ENCODE measurements at regions of chr15 and their contacts with region 1.

Region 1: DNA sequence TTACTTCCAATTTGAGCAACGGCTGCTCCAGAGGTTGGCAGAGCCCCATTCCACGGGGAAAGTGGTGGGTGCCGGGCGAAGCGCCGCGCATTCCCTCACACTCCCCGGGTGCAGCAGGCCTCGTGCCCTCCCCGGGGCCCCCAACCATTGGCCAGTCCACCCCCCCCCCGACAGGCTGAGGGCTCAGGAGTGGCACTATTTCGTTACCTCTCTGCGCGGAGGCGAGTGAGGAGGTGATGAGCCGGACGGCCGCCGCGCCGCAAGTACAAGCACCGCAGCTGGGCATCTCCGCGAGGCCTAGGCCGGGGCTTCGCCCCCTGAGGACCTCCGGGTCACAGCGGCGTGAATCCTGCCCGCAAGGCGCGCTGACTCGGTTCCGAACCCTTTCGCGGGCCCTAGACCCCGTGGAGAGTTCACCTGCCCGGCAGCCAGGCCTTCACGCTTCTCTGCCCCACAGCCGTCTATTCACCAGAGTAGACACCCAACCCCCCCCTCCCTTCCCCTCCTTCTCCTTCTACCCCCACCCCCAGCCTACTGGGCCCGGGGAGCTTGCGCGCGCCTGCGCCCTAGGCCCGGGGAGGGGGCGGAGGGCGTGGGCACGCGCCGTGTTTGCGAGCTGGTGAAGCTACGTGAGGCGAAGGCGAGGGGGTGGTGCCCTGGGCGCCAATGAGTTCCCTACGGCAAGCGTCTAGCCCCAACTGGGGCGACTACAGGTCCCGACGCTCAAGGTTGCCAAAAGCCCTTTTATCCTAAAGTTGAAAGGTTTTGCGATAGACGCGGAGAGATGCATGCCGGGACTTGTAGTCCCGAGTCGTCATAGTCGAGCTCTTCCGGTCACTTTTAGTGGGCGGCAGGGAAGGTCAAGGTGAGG is at the start of gene CLPX:
- DNase-seq: peak; percentile 96
- ATAC-seq: peak; percentile 89
- H3K4me3 ChIP-seq: peak within 1 kb of the TSS; percentile 81 to 97 (median 90)
- H3K27ac ChIP-seq: peak within 1 kb of the TSS; percentile 92
- H3K4me1 ChIP-seq: peaks cover 53% of the 10 kb centered on the region
- H3K27me3 ChIP-seq: no peaks in the 10 kb centered on the region; a peak in 1 of 5 replicates
- CTCF ChIP-seq: no peak
- EP300 ChIP-seq: peak; percentile 23 to 41; a peak in 1 of 4 replicates
- POLR2A ChIP-seq: peak; percentile 80 to 89
- RAD21 ChIP-seq: no peak
- total RNA-seq, gene CLPX: 61.3 and 100 TPM in 2 replicates

Region 2: GRCh38 chr15:65171429-65171828 is 13.7 kb before region 1 on chr15:
- CTCF ChIA-PET with region 1: no interaction called
- POLR2A ChIA-PET with region 1: interaction called, 17 read pairs
- in situ Hi-C with region 1: no loop called
- intact Hi-C with region 1: no loop called
- DNase-seq: peak; percentile 75
- ATAC-seq: peak; percentile 84
- H3K4me3 ChIP-seq: peak overlapping the region in 1 of 3 experiments; percentile 10; a peak in 1 of 6 replicates
- H3K27ac ChIP-seq: peak overlapping the region; percentile 64
- H3K4me1 ChIP-seq: peaks cover 39% of the 10 kb centered on the region
- H3K27me3 ChIP-seq: no peaks in the 10 kb centered on the region
- CTCF ChIP-seq: no peak
- EP300 ChIP-seq: peak in 1 of 2 experiments; percentile 74; a peak in 2 of 4 replicates
- POLR2A ChIP-seq: no peak
- RAD21 ChIP-seq: no peak

Region 3: DNA sequence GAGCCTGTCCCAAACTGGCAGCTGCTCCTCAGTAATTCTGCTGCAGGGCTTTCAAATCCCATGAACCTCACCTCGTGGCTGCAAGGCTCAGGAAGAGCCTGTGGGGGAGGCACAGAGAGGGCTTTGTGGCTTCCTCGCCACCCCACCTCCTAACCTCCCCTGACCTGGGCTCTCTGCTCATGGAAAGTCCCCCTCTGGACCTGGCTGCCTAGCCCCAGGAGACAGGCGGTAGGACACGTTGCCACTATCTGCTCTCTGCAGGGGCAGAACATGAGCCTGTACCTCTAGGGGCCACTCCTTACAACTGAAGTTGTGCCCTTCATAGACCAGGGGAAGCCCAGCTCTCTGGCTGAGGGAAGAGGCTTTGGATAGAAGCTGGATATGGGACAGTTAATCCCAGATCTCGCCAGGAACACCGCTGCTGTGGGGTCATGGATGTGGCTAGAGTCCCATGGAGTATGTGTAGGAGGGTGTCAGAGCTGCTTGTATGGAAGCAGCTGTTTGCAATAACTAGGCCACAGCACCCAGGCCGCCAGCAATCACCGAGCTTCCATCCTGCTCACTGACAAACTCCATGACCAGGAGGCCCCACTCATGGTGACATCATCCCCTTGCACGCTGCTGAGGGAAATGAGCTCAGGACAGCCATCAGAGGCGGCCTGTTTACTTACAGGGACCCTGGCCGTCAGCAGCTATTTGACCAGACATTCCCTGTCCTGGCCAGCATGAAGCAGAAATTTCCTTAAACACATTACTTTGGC is 60.2 kb after region 1 on chr15:
- CTCF ChIA-PET with region 1: no interaction called
- POLR2A ChIA-PET with region 1: interaction called, 17 read pairs
- in situ Hi-C with region 1: no loop called
- intact Hi-C with region 1: no loop called
- DNase-seq: peak; percentile 75
- ATAC-seq: peak; percentile 81
- H3K4me3 ChIP-seq: peak overlapping the region in 2 of 3 experiments; percentile 19 to 52; a peak in 4 of 6 replicates
- H3K27ac ChIP-seq: peak overlapping the region; percentile 37
- H3K4me1 ChIP-seq: peaks cover 51% of the 10 kb centered on the region
- H3K27me3 ChIP-seq: no peaks in the 10 kb centered on the region
- CTCF ChIP-seq: no peak
- EP300 ChIP-seq: no peak
- POLR2A ChIP-seq: peak in 1 of 2 experiments; percentile 36; a peak in 1 of 4 replicates
- RAD21 ChIP-seq: no peak

Region 4: GRCh38 chr15:65275728-65276126 is 90.6 kb after region 1 on chr15:
- CTCF ChIA-PET with region 1: interaction called, 28 read pairs
- POLR2A ChIA-PET with region 1: interaction called, 12 read pairs
- in situ Hi-C with region 1: no loop called
- intact Hi-C with region 1: loop called (anchors 1 kb)
- DNase-seq: peak; percentile 74
- ATAC-seq: peak; percentile 62
- H3K4me3 ChIP-seq: no peak overlapping the region
- H3K27ac ChIP-seq: no peak overlapping the region
- H3K4me1 ChIP-seq: peaks cover 33% of the 10 kb centered on the region
- H3K27me3 ChIP-seq: no peaks in the 10 kb centered on the region
- CTCF ChIP-seq: no peak
- EP300 ChIP-seq: peak in 1 of 2 experiments; percentile 51; a peak in 2 of 4 replicates
- POLR2A ChIP-seq: no peak
- RAD21 ChIP-seq: no peak

Region 5: DNA sequence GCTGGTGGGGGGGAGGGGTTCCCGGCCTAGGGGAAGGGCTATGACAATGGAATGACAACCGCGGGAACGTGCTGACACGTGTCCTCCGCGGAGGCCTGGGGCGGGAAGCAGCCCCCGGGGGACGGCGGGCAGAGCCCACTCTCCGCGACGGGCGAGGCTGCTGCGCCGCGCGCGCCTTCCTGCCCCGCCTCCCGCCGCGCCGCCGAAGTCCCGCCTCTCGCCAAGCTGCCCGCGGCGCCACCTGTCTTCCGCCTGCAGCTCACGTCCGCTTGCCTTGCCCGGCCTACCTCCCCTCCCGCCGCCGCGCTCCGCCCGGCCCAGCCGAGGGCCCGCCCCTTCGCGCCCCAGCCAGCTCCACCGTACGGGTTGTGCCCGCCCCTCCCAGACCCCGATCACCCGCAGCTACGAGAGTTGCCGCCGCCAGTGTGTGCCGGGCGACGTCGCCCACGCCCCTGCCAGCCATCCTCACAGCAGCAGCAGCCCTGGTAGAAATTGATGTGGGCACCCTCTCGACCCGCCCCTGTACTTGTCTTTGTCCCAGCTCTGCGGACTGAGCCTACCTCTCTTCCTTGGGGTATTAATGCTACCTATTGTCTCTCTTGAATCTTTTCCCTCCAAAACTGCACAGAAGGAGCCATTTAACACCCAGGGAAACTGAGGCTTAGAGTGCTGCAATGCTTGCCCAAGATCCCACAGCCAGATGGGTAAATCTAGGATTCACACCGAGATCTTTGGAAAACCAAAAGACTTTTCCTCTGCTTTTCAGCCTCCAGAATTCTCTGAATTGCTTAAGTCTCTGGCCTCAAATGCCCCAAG is 101.8 kb after region 1 on chr15 and contains the start of gene PARP16:
- CTCF ChIA-PET with region 1: no interaction called
- POLR2A ChIA-PET with region 1: interaction called, 46 read pairs
- in situ Hi-C with region 1: no loop called
- intact Hi-C with region 1: no loop called
- DNase-seq: peak; percentile 80
- ATAC-seq: peak; percentile 94
- H3K4me3 ChIP-seq: peak within 1 kb of the TSS; percentile 53 to 82 (median 78)
- H3K27ac ChIP-seq: peak within 1 kb of the TSS; percentile 88
- H3K4me1 ChIP-seq: peaks cover 46% of the 10 kb centered on the region
- H3K27me3 ChIP-seq: no peaks in the 10 kb centered on the region; a peak in 1 of 5 replicates
- CTCF ChIP-seq: peak; percentile 71
- EP300 ChIP-seq: no peak
- POLR2A ChIP-seq: peak; percentile 52 to 69
- RAD21 ChIP-seq: peak; percentile 46; the same call in 1 of the 2 replicates
- total RNA-seq, gene PARP16: 6.7 and 6.8 TPM in 2 replicates

Region 6: GRCh38 chr15:65298731-65299130 is 113.6 kb after region 1 on chr15:
- CTCF ChIA-PET with region 1: interaction called, 23 read pairs
- POLR2A ChIA-PET with region 1: interaction called, 92 read pairs
- in situ Hi-C with region 1: loop called (anchors 5 kb)
- intact Hi-C with region 1: loop called (anchors 2 kb)
- DNase-seq: no peak
- ATAC-seq: no peak
- H3K4me3 ChIP-seq: peak overlapping the region; percentile 35 to 73 (median 49)
- H3K27ac ChIP-seq: no peak overlapping the region
- H3K4me1 ChIP-seq: peaks cover 51% of the 10 kb centered on the region
- H3K27me3 ChIP-seq: no peaks in the 10 kb centered on the region; a peak in 1 of 5 replicates
- CTCF ChIP-seq: no peak
- EP300 ChIP-seq: no peak
- POLR2A ChIP-seq: no peak
- RAD21 ChIP-seq: no peak

Region 7: DNA sequence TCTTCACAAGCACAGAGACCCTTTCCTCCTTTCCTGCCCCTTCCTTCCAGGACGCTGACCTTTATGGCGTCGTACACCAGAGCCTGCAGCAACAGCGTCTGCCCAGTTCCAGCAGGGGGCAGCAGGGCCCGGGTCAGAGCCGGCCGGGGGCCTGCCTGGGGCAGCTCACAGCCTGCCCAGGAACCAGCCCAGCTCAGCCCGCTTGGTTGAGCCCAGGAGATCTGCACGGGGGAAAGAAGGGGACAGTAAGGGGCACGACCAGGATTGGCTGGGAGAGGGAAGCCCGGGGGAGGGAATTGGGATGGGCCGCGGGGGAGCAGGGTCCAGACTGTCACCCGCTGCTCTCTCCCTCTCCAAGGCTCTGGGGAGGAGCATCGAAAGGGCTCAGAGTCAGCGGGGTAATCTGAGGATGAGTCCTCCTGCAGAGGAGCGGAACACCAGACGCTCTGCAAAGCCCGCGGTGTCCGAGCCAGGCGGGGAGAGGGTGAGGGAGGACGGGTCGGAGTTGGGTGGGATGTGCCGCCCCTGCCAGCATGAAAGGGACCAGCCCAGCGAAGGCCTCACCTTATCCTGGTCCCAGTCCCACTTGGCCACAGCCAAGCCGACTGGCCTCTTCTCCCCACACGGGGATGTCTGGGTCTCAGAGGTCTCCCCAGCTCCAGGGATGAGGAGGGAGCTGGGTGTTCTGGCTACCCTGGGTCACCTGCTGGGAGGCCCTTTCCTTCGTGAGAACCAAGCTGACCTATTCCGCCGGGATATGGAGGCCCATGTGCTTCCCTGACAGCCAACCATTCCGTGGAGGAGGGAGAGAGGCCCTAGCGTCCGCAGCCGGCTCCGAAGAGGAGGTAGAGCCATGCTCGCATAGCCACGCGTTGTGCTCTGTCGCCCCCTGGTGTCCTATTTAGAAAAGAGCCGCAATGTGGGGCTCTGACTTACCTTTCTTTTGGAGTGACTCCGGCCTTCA is 200.1 kb after region 1 on chr15:
- CTCF ChIA-PET with region 1: no interaction called
- POLR2A ChIA-PET with region 1: no interaction called
- in situ Hi-C with region 1: loop called (anchors 10 kb)
- intact Hi-C with region 1: loop called (anchors 10 kb)
- DNase-seq: peak; percentile 87
- ATAC-seq: peak; percentile 91
- H3K4me3 ChIP-seq: peak overlapping the region; percentile 44 to 80 (median 58)
- H3K27ac ChIP-seq: peak overlapping the region; percentile 71
- H3K4me1 ChIP-seq: peaks cover 42% of the 10 kb centered on the region
- H3K27me3 ChIP-seq: peaks cover 0 to 11% of the 10 kb centered on the region in 2 experiments; a peak in 2 of 5 replicates
- CTCF ChIP-seq: peak; percentile 98
- EP300 ChIP-seq: 0 out of 4 replicates have a peak, but pooled peaks have one; percentile 11 to 25
- POLR2A ChIP-seq: 0 out of 4 replicates have a peak, but pooled peaks of 1 of the 2 experiments have one; percentile 42
- RAD21 ChIP-seq: peak; percentile 96